ENCODE measurements at regions of chr15 and their contacts with region 1.

Region 1: GRCh38 chr15:33215941-33216872 is 21.7 kb upstream of the FMN1 start:
- DNase-seq: peak in 3 of 14 experiments; percentile 31 to 49 (median 39)
- ATAC-seq: peak; percentile 43
- H3K4me3 ChIP-seq: no peak overlapping the region
- H3K4me3 Mint-ChIP-seq: no peak overlapping the region
- H3K27ac ChIP-seq: no peak overlapping the region
- H3K27ac Mint-ChIP-seq: no peak overlapping the region
- H3K4me1 ChIP-seq: no peaks in the 10 kb centered on the region
- H3K4me1 Mint-ChIP-seq: no peaks in the 10 kb centered on the region
- H3K27me3 ChIP-seq: no peaks in the 10 kb centered on the region
- H3K27me3 Mint-ChIP-seq: no peaks in the 10 kb centered on the region
- CTCF ChIP-seq: peak; percentile 72

Region 2: GRCh38 chr15:33168444-33168843 is 47.8 kb before region 1 on chr15:
- CTCF ChIA-PET with region 1: no interaction called
- POLR2A ChIA-PET with region 1: no interaction called
- intact Hi-C with region 1: loop called in 1 of 2 experiments (anchors 5 kb)
- DNase-seq: no peak
- ATAC-seq: no peak
- H3K4me3 ChIP-seq: no peak overlapping the region
- H3K4me3 Mint-ChIP-seq: no peak overlapping the region
- H3K27ac ChIP-seq: no peak overlapping the region
- H3K27ac Mint-ChIP-seq: no peak overlapping the region
- H3K4me1 ChIP-seq: no peaks in the 10 kb centered on the region
- H3K4me1 Mint-ChIP-seq: no peaks in the 10 kb centered on the region
- H3K27me3 ChIP-seq: no peaks in the 10 kb centered on the region
- H3K27me3 Mint-ChIP-seq: peaks cover 12% of the 10 kb centered on the region
- CTCF ChIP-seq: no peak

Region 3: DNA sequence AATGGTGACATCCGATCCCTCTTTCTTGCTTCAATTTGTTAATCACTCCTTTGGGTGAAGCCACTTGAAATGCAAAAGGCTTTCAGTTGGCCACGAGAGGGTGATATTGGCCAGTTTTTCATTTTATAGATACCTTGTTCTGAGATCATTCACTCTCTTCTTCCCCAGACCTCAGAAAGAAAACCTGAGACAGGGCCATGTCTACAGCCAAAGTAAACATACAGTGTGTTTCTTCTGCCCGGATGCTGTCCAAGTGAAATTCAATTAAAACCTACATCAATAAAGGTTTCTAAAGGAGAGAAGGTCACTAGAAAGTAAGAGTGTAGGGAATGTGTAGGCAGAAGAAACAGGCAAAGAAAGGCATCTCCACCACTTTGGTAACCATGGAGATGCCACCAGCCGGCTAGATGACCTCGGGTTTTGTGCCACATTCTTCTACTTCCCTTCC is 17.8 kb after region 1 on chr15:
- CTCF ChIA-PET with region 1: no interaction called
- POLR2A ChIA-PET with region 1: no interaction called
- intact Hi-C with region 1: loop called in 1 of 2 experiments (anchors 2 kb)
- DNase-seq: peak in 3 of 14 experiments; percentile 11 to 17 (median 15)
- ATAC-seq: no peak
- H3K4me3 ChIP-seq: no peak overlapping the region
- H3K4me3 Mint-ChIP-seq: no peak overlapping the region
- H3K27ac ChIP-seq: no peak overlapping the region
- H3K27ac Mint-ChIP-seq: no peak overlapping the region
- H3K4me1 ChIP-seq: no peaks in the 10 kb centered on the region
- H3K4me1 Mint-ChIP-seq: no peaks in the 10 kb centered on the region
- H3K27me3 ChIP-seq: peaks cover 3 to 4% of the 10 kb centered on the region in 2 experiments
- H3K27me3 Mint-ChIP-seq: peaks cover 6% of the 10 kb centered on the region
- CTCF ChIP-seq: no peak